ENCODE measurements at regions of chr16 and their contacts with region 1.

Region 1: DNA sequence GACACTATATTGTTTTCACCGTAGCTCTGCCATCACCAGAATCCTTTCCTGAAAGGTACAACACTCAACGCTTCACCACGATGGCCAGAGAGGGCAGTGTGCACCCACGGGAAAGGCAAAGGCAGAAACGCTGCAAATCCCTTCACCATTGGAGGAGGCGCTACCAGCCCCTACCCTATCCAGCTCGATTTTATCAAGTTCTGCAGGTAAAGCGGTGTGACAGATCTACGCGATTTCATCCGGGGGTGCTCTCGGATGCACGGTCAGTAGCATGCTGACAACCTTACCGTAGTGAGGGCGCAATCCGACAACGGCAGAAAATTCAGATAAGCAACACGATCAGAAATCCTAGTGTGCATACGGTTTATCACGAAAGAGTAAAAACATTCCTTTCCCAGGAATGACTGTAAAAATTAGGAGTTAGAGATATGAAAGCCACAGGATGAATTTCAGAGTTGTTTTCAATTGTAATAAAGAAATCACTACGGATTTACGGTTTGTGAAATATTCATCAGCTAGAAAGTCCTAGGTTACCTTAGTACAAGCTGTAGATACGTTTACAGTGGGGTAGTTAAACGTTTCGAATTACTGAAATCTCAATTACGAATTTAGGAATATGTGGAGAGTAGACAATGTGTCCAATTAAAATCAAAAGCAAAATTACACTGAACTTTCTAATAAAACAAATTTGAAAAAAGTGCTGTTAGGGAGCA is 1.8 kb downstream of the NETO2 start:
- DNase-seq: peak; percentile 79
- CTCF ChIP-seq: peak; percentile 97

Region 2: GRCh38 chr16:46947900-46948547 is 193.9 kb before region 1 on chr16:
- CTCF ChIA-PET with region 1: interaction called, 17 read pairs
- POLR2A ChIA-PET with region 1: no interaction called
- DNase-seq: peak; percentile 64
- CTCF ChIP-seq: peak; percentile 37

Region 3: DNA sequence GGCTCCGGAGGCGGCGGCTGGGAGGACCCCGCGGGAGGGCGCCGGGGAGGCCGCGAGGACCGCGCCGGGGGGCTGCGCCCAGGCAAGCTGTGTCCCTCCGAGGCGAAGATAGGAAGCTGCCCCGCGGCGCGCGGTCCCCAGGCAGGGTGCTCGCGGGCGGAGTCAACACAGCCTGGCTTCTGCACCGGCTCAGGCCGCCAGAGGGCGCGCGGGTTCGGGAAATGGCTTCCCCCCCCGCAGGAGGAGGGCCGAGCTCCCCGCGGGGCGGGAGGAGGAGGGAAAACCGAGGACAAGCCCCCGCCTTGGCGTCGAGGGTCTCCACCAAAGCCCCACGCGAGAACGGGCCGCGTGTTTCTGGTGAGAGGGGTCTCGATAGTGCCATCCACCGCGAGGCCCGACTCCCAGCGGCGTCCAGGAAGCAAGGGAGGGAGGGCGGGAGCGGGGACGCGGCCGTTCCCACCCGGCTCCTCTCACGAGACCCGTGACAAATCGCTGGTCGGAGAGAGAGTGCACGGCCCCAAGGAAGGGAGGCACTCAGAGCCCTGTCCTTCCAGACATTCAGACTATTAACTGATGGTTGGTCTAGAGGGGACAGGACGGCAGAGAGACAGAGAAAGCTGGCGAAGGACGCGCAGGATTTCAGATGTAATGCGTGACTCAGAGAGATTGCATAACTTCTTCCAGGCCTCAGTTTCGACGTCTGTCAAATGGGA is 104.0 kb before region 1 on chr16:
- CTCF ChIA-PET with region 1: interaction called, 43 read pairs
- POLR2A ChIA-PET with region 1: interaction called, 5 read pairs
- DNase-seq: peak; percentile 95
- CTCF ChIP-seq: peak; percentile 96

Region 4: DNA sequence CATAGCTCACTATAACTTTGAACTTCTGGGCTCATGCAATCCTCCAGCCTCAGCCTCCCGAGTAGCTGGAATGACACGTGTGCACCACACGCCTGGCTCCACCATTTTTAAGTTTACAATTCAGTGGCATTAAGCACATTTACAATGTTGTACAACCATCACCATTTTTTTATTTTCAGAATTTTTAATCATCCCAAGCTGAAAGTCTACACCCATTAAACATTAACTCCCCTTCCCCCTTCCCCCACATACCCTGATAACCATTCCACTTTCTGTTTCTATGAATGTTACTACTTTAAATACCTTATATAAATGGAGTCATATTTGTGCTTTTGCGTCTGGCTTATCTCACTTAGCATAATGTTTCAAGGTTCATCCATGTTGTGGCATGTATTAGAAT is 16.2 kb before region 1 on chr16:
- CTCF ChIA-PET with region 1: interaction called, 72 read pairs
- POLR2A ChIA-PET with region 1: no interaction called
- DNase-seq: no peak
- CTCF ChIP-seq: no peak

Region 5: DNA sequence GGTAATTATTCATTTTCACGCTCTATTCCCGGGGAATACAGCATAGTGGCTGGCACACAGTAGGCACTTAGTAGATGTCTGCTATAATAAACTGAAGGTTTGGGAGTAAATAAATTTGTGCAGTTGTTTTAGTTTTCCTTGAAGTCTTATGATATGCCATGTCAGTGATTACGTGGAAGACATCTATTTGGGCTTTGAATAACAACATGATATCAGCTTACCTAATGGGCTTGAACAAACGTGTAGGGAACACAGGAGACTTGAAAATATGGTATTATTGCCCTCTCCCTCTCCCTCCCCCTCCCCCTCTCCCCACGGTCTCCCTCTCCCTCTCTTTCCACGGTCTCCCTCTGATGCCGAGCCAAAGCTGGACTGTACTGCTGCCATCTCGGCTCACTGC is 38.1 kb after region 1 on chr16:
- CTCF ChIA-PET with region 1: no interaction called
- POLR2A ChIA-PET with region 1: no interaction called
- DNase-seq: no peak
- CTCF ChIP-seq: no peak

Region 6: DNA sequence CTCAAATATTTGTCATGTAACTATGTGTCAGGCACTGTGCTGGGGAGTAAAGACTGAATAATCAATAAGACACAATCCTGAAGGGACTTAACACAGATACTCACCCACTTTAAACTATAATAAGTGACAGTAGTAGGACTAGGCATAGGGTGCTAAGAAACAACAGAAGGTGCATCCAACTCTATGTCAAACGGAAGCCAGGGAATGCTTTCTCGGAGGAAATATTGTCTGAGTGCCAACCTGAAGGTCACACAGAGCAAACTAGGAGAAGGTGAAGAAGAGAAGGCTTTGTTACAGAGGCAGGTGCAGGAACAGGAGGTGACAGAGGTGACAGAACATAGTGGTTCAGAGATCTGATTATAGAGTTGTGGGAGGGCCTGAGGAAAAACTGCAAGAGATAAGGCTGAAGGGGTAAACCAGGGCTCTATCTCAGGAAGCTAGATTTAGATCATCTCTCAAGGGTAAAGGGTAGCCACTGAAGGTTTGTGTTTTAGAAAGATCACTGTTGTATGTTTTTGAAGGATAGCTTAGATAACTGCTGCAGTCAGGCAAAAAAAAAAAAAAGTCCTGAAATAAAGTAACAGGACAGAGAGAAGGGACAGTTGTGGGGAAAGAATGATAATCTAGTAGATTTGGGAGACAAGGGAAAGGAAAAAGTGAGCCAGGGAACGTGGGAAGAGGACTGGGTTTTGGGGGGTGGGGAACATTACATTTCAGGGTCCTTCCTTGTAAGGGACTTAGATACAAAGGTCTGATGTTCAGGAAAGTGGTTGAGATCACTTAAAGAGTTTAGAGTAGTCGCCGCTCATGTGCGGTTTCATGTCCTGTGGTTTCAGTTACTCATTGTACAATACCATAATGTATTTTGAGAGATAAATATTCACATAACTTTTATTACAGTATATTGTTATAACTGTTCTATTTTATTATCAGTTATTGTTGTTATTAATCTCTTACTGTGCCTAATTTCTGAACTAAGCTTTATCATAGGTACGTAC is 87.4 kb after region 1 on chr16:
- CTCF ChIA-PET with region 1: no interaction called
- POLR2A ChIA-PET with region 1: no interaction called
- DNase-seq: no peak
- CTCF ChIP-seq: no peak

Region 7: GRCh38 chr16:47699106-47699505 is 557.2 kb after region 1 on chr16:
- CTCF ChIA-PET with region 1: no interaction called
- POLR2A ChIA-PET with region 1: no interaction called
- DNase-seq: no peak
- CTCF ChIP-seq: no peak

Region 8: DNA sequence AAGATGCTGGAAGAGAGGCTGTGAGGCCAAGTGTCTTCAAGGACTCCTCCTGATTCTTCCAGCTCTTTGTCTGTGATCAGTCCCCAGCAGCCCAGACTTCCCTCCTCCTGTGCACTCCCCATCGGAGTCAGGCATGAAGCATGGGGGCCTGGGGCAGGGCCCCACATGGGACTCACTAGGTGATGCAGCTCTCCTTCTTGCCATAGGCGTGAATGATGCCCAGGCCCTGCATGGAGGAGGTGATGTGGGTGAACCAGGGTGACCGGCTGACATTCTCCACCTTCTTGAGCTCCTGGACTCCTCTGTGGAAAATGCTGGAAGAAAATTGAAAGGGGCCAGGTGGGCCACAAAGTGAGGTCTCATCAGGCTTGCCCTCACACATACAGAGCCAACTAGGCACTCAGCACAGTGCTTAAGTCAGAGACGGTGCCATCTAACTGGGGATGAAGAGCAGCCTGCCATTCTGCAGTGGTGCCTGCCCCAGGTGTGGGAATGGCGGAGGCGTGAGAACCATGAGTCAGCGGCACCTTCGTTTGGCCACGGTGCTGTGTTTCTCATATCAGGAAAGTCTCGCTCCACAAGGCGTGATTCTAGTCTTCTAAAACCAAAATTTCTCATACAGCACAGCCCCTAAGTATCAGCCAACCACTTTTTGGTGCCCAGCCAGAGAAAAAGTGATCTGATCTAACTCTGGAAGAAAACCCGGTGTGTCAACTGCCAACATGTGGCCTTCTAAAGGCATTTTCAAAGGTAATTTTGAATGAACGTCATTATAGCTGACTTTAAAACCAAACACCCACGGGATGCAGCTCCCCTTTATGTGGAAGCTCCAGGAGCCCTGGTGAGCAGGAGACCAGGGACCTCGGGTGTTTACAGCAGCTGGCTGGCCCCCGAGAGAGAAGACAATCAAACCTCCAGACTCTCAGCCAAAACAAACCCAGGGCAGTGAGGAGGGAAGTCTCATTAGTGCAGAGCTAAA is 959.1 kb after region 1 on chr16:
- CTCF ChIA-PET with region 1: interaction called, 10 read pairs
- POLR2A ChIA-PET with region 1: no interaction called
- DNase-seq: peak; percentile 76
- CTCF ChIP-seq: no peak

Region 9: GRCh38 chr16:48156790-48157209 is 1014.9 kb after region 1 on chr16:
- CTCF ChIA-PET with region 1: interaction called, 61 read pairs
- POLR2A ChIA-PET with region 1: no interaction called
- DNase-seq: peak; percentile 80
- CTCF ChIP-seq: peak; percentile 98